Keratinocyte (primary cell): ENCODE measurements at regions of chr14 and their contacts with region 1.

Region 1: DNA sequence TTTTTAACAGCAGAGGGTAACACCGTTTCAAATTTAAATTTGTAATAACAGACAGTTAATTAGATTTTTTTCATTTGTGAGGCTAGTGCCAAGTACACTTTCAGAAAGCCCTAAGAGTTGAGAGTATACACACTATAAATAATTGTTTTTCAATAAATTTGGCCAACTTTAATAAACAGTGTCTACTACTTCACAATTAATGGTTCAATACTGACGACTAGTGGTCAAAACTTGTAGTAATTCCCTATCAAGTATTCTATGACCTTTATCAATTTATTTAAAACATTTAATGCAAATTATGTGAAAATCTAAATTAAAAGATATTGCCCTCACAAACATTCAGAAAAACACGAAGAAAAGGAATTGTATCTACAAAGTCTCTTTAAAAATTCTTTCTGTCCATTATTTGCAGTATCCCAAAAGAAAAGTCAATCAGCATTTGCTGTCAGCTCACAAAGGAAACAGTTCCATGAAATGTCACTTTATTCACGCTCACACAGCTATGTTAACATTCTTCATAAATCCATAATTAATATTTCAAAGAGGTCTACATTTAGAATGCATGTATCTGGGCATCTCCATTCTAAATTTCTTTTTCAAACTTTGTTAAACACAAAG is 91.2 kb downstream of the CEP128 start:
- DNase-seq: no peak
- H3K4me3 ChIP-seq: no peak overlapping the region
- H3K27ac ChIP-seq: no peak overlapping the region
- H3K4me1 ChIP-seq: no peaks in the 10 kb centered on the region
- H3K27me3 ChIP-seq: no peaks in the 10 kb centered on the region
- CTCF ChIP-seq: peak in 1 of 3 experiments; percentile 30

Region 2: DNA sequence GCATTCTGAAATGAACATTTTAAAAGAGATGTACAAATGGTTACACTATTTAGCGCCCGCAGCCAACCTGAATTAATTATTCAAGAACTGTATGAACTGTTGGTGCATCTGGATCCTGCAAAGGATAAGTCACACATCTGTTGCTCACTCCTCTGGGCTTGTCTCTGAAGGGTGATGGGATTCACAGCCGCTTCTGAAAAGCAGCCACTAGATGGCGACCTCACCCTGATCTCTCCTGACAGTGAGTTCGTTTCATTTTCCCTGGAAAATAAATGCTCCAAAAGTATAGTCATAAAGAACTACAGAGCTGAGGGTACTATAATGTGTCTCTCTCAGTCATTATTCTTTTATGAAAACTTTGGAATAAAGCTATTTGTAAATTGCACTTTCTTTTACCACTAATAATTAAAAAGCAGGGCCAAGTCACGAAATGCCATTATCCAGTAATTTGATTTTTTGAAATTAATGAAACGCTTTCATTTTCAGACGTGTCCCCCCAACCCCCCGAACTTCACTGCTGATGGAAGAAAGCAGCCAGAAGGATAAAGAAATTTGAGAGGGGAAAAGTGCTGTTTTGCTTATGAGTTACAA is 1890.5 kb before region 1 on chr14:
- dilution Hi-C with region 1: loop called (anchors 25 kb)
- DNase-seq: no peak
- H3K4me3 ChIP-seq: no peak overlapping the region
- H3K27ac ChIP-seq: no peak overlapping the region
- H3K4me1 ChIP-seq: no peaks in the 10 kb centered on the region
- H3K27me3 ChIP-seq: no peaks in the 10 kb centered on the region
- CTCF ChIP-seq: peak; percentile 80 to 88 (median 87)

Region 3: GRCh38 chr14:80055667-80056496 is 794.4 kb before region 1 on chr14:
- dilution Hi-C with region 1: no loop called
- DNase-seq: no peak
- H3K4me3 ChIP-seq: no peak overlapping the region
- H3K27ac ChIP-seq: no peak overlapping the region
- H3K4me1 ChIP-seq: no peaks in the 10 kb centered on the region
- H3K27me3 ChIP-seq: no peaks in the 10 kb centered on the region
- CTCF ChIP-seq: peak; percentile 69 to 84 (median 78)